ENCODE measurements at regions of chr2 and their contacts with region 1.

Region 1: GRCh38 chr2:111897924-111898702 is at the start of gene MERTK:
- DNase-seq: no peak
- H3K4me3 ChIP-seq: peak within 1 kb of the TSS; percentile 63 to 86 (median 70)
- H3K27ac ChIP-seq: peak within 1 kb of the TSS; percentile 69 to 93 (median 83)
- H3K4me1 ChIP-seq: peaks cover 12 to 59% (median 17%) of the 10 kb centered on the region in 3 donors
- H3K27me3 ChIP-seq: peaks cover 0 to 23% (median 0%) of the 10 kb centered on the region in 4 donors
- CTCF ChIP-seq: peak in 5 of 6 experiments; percentile 43 to 68 (median 55)
- POLR2A ChIP-seq: peak in 2 of 4 donors; percentile 80 to 87
- total RNA-seq, gene MERTK: 1.7 to 13.7 (median 7.0) TPM

Region 2: GRCh38 chr2:112045446-112046014 is 147.4 kb after region 1 on chr2:
- intact Hi-C with region 1: loop called (anchors 2 kb)
- DNase-seq: no peak
- H3K4me3 ChIP-seq: no peak overlapping the region
- H3K27ac ChIP-seq: no peak overlapping the region
- H3K4me1 ChIP-seq: peaks cover 0 to 36% (median 2%) of the 10 kb centered on the region in 3 donors
- H3K27me3 ChIP-seq: no peaks in the 10 kb centered on the region
- CTCF ChIP-seq: no peak
- POLR2A ChIP-seq: no peak